T-cell (primary cell): ENCODE measurements at regions of chr1 and their contacts with region 1.

Region 1: DNA sequence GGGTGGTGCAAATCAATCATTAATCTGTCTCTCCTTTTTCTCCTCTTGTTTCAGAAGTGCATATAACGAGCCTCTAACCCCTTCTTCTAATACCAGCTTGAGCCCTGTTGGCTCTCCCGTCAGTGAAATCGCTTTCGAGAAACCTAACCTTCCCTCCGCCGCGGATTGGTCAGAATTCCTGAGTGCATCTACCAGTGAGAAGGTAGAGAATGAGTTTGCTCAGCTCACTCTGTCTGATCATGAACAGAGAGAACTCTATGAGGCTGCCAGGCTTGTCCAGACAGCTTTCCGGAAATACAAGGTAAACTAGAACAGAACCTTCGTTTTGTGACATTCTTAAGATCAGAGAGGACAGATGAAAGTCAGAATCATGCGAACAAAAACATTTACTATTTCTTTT is 25.3 kb upstream of the VAMP3 start:
- DNase-seq: no peak
- ATAC-seq: no peak
- H3K4me3 ChIP-seq: no peak overlapping the region
- H3K4me3 Mint-ChIP-seq: no peak overlapping the region
- H3K27ac ChIP-seq: no peak overlapping the region
- H3K27ac Mint-ChIP-seq: no peak overlapping the region
- H3K4me1 ChIP-seq: peaks cover 0 to 8% of the 10 kb centered on the region in 2 experiments
- H3K4me1 Mint-ChIP-seq: peaks cover 0 to 8% (median 2%) of the 10 kb centered on the region in 3 donors
- H3K27me3 ChIP-seq: peaks cover 0 to 5% of the 10 kb centered on the region in 2 experiments
- H3K27me3 Mint-ChIP-seq: peaks cover 4 to 9% of the 10 kb centered on the region in 2 donors

Region 2: GRCh38 chr1:7313081-7313546 is 432.7 kb before region 1 on chr1:
- CTCF ChIA-PET with region 1: no interaction called
- POLR2A ChIA-PET with region 1: no interaction called
- DNase-seq: no peak
- ATAC-seq: no peak
- H3K4me3 ChIP-seq: no peak overlapping the region
- H3K4me3 Mint-ChIP-seq: no peak overlapping the region
- H3K27ac ChIP-seq: no peak overlapping the region
- H3K27ac Mint-ChIP-seq: no peak overlapping the region
- H3K4me1 ChIP-seq: no peaks in the 10 kb centered on the region
- H3K4me1 Mint-ChIP-seq: peaks cover 0 to 5% (median 0%) of the 10 kb centered on the region in 3 donors
- H3K27me3 ChIP-seq: peaks cover 0 to 5% of the 10 kb centered on the region in 2 experiments
- H3K27me3 Mint-ChIP-seq: peaks cover 26 to 38% of the 10 kb centered on the region in 2 donors

Region 3: GRCh38 chr1:7710859-7711258 is 34.9 kb before region 1 on chr1:
- CTCF ChIA-PET with region 1: interaction called in 1 of 2 experiments, 10 read pairs
- POLR2A ChIA-PET with region 1: no interaction called
- DNase-seq: no peak
- ATAC-seq: no peak
- H3K4me3 ChIP-seq: no peak overlapping the region
- H3K4me3 Mint-ChIP-seq: no peak overlapping the region
- H3K27ac ChIP-seq: no peak overlapping the region
- H3K27ac Mint-ChIP-seq: no peak overlapping the region
- H3K4me1 ChIP-seq: peaks cover 0 to 2% of the 10 kb centered on the region in 2 experiments
- H3K4me1 Mint-ChIP-seq: peaks cover 0 to 4% (median 4%) of the 10 kb centered on the region in 3 donors
- H3K27me3 ChIP-seq: peaks cover 0 to 28% of the 10 kb centered on the region in 2 experiments
- H3K27me3 Mint-ChIP-seq: peaks cover 56% of the 10 kb centered on the region in 2 donors

Region 4: GRCh38 chr1:8625491-8625890 is 879.7 kb after region 1 on chr1:
- CTCF ChIA-PET with region 1: no interaction called
- POLR2A ChIA-PET with region 1: no interaction called
- DNase-seq: no peak
- ATAC-seq: no peak
- H3K4me3 ChIP-seq: no peak overlapping the region
- H3K4me3 Mint-ChIP-seq: no peak overlapping the region
- H3K27ac ChIP-seq: no peak overlapping the region
- H3K27ac Mint-ChIP-seq: no peak overlapping the region
- H3K4me1 ChIP-seq: peaks cover 0 to 15% of the 10 kb centered on the region in 2 experiments
- H3K4me1 Mint-ChIP-seq: peaks cover 31 to 49% (median 48%) of the 10 kb centered on the region in 3 donors
- H3K27me3 ChIP-seq: no peaks in the 10 kb centered on the region
- H3K27me3 Mint-ChIP-seq: no peaks in the 10 kb centered on the region